Ovary (tissue), 10 donors: ENCODE measurements at regions of chr6 and their contacts with region 1.

Region 1: DNA sequence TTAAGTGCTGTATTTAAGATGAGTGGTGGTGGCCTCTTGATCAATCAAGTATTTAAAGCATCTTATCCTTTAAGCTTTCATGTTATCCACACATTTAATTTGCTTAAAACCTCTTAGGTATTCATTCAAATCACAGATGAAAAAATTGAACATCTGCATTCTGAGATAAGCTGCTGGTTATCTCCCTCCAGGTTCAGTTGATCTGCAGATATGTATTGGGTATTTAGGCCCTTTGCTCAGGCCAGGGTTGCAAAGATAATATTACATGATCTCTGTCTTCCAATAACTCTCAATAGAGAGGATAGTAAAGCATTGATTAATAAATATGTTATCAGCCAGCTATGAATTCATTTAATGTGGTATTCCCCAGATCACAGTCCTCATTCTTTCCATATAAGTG is 45.9 kb downstream of the RPS12 start:
- DNase-seq: no peak
- H3K4me3 ChIP-seq: no peak overlapping the region
- H3K27ac ChIP-seq: no peak overlapping the region
- H3K4me1 ChIP-seq: no peaks in the 10 kb centered on the region
- H3K27me3 ChIP-seq: no peaks in the 10 kb centered on the region
- CTCF ChIP-seq: no peak
- EP300 ChIP-seq: no peak
- POLR2A ChIP-seq: no peak

Region 2: GRCh38 chr6:132877003-132877402 is 16.7 kb after region 1 on chr6:
- intact Hi-C with region 1: loop called in 1 of 4 experiments (anchors 2 kb)
- DNase-seq: no peak
- H3K4me3 ChIP-seq: no peak overlapping the region
- H3K27ac ChIP-seq: no peak overlapping the region
- H3K4me1 ChIP-seq: no peaks in the 10 kb centered on the region
- H3K27me3 ChIP-seq: no peaks in the 10 kb centered on the region
- CTCF ChIP-seq: no peak
- EP300 ChIP-seq: no peak
- POLR2A ChIP-seq: no peak

Region 3: DNA sequence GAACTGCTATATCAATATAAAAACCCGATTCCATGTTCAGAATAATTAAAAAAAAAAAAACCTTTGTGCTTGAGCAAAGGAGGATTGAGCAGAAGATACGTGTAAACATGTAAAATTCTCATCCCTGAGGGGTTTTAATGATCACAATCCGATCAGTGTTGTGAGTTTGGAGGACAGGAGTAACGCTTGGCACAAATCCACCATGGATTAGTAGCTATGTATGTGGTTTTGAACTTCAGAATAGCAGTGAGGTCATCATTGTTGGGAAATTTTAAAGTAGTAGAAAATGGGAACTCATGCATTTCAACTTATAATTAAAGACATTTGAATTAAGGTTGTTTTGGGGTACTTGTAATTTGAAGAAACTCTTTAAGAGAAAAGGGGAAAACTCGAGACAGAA is 157.3 kb after region 1 on chr6:
- intact Hi-C with region 1: no loop called
- DNase-seq: no peak
- H3K4me3 ChIP-seq: no peak overlapping the region
- H3K27ac ChIP-seq: no peak overlapping the region
- H3K4me1 ChIP-seq: no peaks in the 10 kb centered on the region
- H3K27me3 ChIP-seq: no peaks in the 10 kb centered on the region
- CTCF ChIP-seq: no peak
- EP300 ChIP-seq: no peak
- POLR2A ChIP-seq: no peak